ENCODE measurements at regions of chr4 and their contacts with region 1.

Region 1: DNA sequence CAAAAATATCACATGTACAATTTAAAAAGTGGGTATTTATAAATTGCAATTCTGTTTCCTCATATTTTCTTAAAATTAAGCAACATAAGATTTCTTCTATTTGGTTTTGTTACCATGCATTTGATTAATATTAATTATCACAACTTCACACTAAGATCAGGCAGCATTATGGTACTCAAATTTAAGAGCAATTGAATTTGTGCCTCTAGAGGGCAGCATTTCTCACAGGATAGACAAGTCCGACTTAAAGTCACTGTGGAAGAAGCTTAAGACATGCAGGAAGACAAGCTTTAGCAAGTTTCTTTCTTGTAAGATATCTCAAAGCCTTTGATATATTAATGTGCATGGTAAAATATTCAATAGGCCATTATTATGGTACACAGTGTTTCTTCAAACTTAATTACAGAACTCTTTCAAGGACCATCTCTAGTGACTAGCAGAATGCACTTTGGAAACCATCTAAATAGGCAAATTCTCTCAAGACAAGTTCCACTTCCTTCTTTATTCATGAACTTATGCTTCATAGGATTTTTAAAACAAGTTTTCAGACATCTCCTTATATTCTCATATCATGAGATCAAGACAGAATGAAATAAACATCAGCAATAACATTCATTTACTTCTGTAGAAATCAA is 35.0 kb downstream of the FBXW7 start:
- DNase-seq: no peak
- ATAC-seq: peak; percentile 85

Region 2: DNA sequence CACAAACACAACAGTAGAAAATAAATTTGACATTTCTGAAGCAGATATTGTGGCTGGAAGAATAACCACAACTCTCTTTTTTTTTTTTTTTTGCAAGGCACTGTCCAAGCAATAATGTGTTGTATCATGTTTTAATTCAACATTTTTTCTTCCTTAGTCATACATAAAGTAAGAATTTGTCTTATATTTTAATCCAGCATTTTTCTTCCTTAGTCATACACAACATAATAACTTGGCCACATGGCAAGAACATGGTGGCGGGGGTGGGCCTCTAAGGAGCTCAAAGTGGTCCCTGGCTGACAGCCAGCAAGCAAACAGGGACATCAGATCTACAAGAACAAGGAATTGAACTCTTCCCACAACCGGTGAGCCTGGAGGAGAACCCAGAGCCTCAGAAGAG is 14.8 kb after region 1 on chr4:
- intact Hi-C with region 1: no loop called
- DNase-seq: no peak
- ATAC-seq: no peak

Region 3: GRCh38 chr4:152640058-152640833 is 139.3 kb after region 1 on chr4:
- intact Hi-C with region 1: loop called (anchors 5 kb)
- DNase-seq: no peak
- ATAC-seq: peak; percentile 52

Region 4: GRCh38 chr4:152690706-152691651 is 190.1 kb after region 1 on chr4:
- intact Hi-C with region 1: no loop called
- DNase-seq: no peak
- ATAC-seq: peak; percentile 85

Region 5: GRCh38 chr4:152735396-152735859 is 234.5 kb after region 1 on chr4:
- intact Hi-C with region 1: loop called (anchors 5 kb)
- DNase-seq: no peak
- ATAC-seq: peak; percentile 56

Measured in Right ventricle myocardium superior (tissue), 1 donor.